Right ventricle myocardium superior (tissue), 1 donor: ENCODE measurements at regions of chr19 and their contacts with region 1.

Region 1: DNA sequence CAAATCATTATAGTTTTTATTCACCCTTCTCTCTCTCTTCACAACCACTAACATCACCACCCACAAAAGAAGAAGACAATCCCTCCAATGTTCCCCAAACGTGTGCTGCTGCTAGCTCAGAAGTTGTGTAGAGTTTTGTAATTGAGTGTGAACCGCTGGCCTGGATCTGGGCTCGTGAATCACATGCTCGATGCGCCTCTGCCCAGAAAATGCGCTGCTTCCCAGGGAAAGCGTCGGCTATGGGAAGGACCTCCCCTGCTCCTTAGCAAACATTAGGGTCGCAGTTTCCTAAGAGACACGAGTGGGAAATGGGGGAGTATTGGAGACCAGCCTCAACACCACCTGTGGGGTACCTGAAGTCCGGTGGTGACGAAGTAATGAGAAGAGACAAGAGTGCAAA is 38.4 kb upstream of the ZNF726 start:
- DNase-seq: no peak
- ATAC-seq: no peak

Region 2: GRCh38 chr19:23969630-23970029 is 93.4 kb after region 1 on chr19:
- intact Hi-C with region 1: loop called (anchors 10 kb)
- DNase-seq: no peak
- ATAC-seq: no peak